ENCODE measurements at regions of chr11 and their contacts with region 1.

Region 1: GRCh38 chr11:45390407-45390806 is 104.3 kb upstream of the SYT13 start:
- DNase-seq: no peak
- ATAC-seq: no peak
- H3K4me3 ChIP-seq: no peak overlapping the region
- H3K27ac ChIP-seq: no peak overlapping the region
- H3K4me1 ChIP-seq: no peaks in the 10 kb centered on the region
- H3K27me3 ChIP-seq: peaks cover 0 to 7% (median 0%) of the 10 kb centered on the region in 9 donors
- CTCF ChIP-seq: no peak
- POLR2A ChIP-seq: no peak

Region 2: GRCh38 chr11:45500451-45500850 is 110.0 kb after region 1 on chr11:
- intact Hi-C with region 1: loop called in 1 of 10 experiments (anchors 10 kb)
- DNase-seq: no peak
- ATAC-seq: no peak
- H3K4me3 ChIP-seq: no peak overlapping the region
- H3K27ac ChIP-seq: no peak overlapping the region
- H3K4me1 ChIP-seq: peaks cover 0 to 6% (median 0%) of the 10 kb centered on the region in 12 donors
- H3K27me3 ChIP-seq: peaks cover 0 to 4% (median 0%) of the 10 kb centered on the region in 9 donors
- CTCF ChIP-seq: no peak
- POLR2A ChIP-seq: no peak

Measured in heart left ventricle (tissue), 16 donors.